Activated CD8-positive, alpha-beta T cell treated with anti-CD3 and anti-CD28 coated beads, Interleukin-2, amount 10 ng/mL, durations not matched to agents 7 days and 5 days (primary cell): ENCODE measurements at regions of chr11 and their contacts with region 1.

Region 1: GRCh38 chr11:59186130-59186594 is 14.2 kb downstream of the DTX4 start:
- DNase-seq: peak; percentile 53
- ATAC-seq: peak; percentile 71
- H3K4me3 Mint-ChIP-seq: no peak overlapping the region
- H3K27ac Mint-ChIP-seq: no peak overlapping the region
- H3K4me1 Mint-ChIP-seq: peaks cover 4% of the 10 kb centered on the region
- H3K27me3 Mint-ChIP-seq: peaks cover 3% of the 10 kb centered on the region

Region 2: GRCh38 chr11:59197991-59198390 is 11.8 kb after region 1 on chr11:
- CTCF ChIA-PET with region 1: interaction called, 33 read pairs
- POLR2A ChIA-PET with region 1: no interaction called
- DNase-seq: no peak
- ATAC-seq: no peak
- H3K4me3 Mint-ChIP-seq: no peak overlapping the region
- H3K27ac Mint-ChIP-seq: no peak overlapping the region
- H3K4me1 Mint-ChIP-seq: no peaks in the 10 kb centered on the region
- H3K27me3 Mint-ChIP-seq: peaks cover 2% of the 10 kb centered on the region

Region 3: GRCh38 chr11:59207988-59208451 is 21.9 kb after region 1 on chr11:
- CTCF ChIA-PET with region 1: interaction called, 33 read pairs
- POLR2A ChIA-PET with region 1: no interaction called
- DNase-seq: peak; percentile 50
- ATAC-seq: peak; percentile 76
- H3K4me3 Mint-ChIP-seq: no peak overlapping the region
- H3K27ac Mint-ChIP-seq: no peak overlapping the region
- H3K4me1 Mint-ChIP-seq: peaks cover 17% of the 10 kb centered on the region
- H3K27me3 Mint-ChIP-seq: peaks cover 27% of the 10 kb centered on the region